ENCODE measurements at regions of chr3 and their contacts with region 1.

Region 1: GRCh38 chr3:32467333-32468070 is 35.1 kb downstream of the CMTM6 start:
- DNase-seq: peak; percentile 85
- CTCF ChIP-seq: peak; percentile 99

Region 2: GRCh38 chr3:32374788-32375595 is 92.5 kb before region 1 on chr3:
- CTCF ChIA-PET with region 1: interaction called, 93 read pairs
- POLR2A ChIA-PET with region 1: no interaction called
- DNase-seq: peak; percentile 62
- CTCF ChIP-seq: peak; percentile 64

Region 3: GRCh38 chr3:32414520-32415202 is 52.8 kb before region 1 on chr3:
- CTCF ChIA-PET with region 1: interaction called, 76 read pairs
- POLR2A ChIA-PET with region 1: no interaction called
- DNase-seq: no peak
- CTCF ChIP-seq: no peak

Region 4: GRCh38 chr3:32438596-32439344 is 28.7 kb before region 1 on chr3:
- CTCF ChIA-PET with region 1: interaction called, 42 read pairs
- POLR2A ChIA-PET with region 1: no interaction called
- DNase-seq: peak; percentile 85
- CTCF ChIP-seq: no peak

Region 5: DNA sequence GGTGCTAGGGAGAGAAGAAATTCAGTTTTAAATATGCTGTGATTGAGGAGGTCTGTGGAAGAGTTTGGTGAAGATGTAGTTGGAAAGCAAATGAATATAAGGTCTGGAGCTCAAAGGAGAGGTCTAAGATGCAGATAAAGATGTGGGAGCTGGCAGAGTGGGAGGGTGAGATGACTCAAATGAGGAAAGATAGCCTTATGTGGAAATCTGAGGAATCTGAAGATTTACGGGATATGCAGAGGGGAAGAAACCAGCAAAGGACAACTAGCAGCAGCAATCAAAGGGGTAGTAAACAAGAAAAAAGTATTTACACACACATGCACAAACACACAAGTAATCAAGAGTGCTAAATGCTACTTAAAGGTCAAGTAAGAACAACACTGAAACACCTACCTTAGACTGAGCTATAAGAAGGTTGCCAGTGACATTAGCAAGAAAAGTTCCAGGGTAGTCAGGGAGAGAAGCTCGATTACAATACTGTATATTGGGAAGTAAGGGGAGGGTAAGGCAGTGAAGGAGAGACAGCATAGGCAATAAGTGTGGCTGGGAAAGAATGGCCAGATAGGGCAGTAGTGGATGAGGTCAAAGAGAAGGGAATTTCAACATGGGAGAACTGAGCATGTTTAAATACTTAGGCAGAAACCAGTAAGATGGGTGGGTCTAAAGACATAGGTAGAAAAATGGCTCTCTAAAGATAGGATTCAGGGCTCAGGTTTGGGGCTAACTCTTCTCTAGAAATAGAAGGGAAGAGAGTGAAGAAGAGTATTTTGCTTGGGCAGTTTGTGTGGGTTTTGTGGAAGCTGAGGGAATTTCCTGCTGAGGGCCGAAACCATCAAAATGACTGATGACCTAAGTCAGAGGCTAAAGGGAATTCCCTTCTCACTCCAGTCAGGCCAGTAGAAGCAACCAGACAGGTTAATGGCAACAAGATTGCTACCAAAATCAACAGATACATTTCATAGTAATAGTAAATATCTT is 26.2 kb after region 1 on chr3:
- CTCF ChIA-PET with region 1: interaction called, 62 read pairs
- POLR2A ChIA-PET with region 1: no interaction called
- DNase-seq: peak; percentile 56
- CTCF ChIP-seq: no peak

Measured in GM10248 (cell line).